ENCODE measurements at regions of chr7 and their contacts with region 1.

Region 1: GRCh38 chr7:98106647-98107445 is at the start of gene LMTK2:
- DNase-seq: peak; percentile 77 to 93
- ATAC-seq: peak; percentile 97 to 98
- H3K4me3 ChIP-seq: peak within 1 kb of the TSS; percentile 90
- H3K27ac ChIP-seq: peak within 1 kb of the TSS; percentile 86 to 91
- H3K4me1 ChIP-seq: peaks cover 39% of the 10 kb centered on the region
- CTCF ChIP-seq: peak; percentile 94
- EP300 ChIP-seq: no peak
- POLR2A ChIP-seq: peak; percentile 92
- RAD21 ChIP-seq: peak; percentile 66 to 74
- polyA plus RNA-seq, gene LMTK2: 13.0 and 14.9 TPM in 2 replicates

Region 2: GRCh38 chr7:97555857-97556421 is 550.9 kb before region 1 on chr7:
- CTCF ChIA-PET with region 1: no interaction called
- POLR2A ChIA-PET with region 1: no interaction called
- DNase-seq: peak in 1 of 2 experiments; percentile 2
- ATAC-seq: no peak
- H3K4me3 ChIP-seq: no peak overlapping the region
- H3K27ac ChIP-seq: no peak overlapping the region
- H3K4me1 ChIP-seq: no peaks in the 10 kb centered on the region
- CTCF ChIP-seq: no peak
- EP300 ChIP-seq: no peak
- POLR2A ChIP-seq: no peak
- RAD21 ChIP-seq: no peak

Region 3: GRCh38 chr7:97722386-97722785 is 384.5 kb before region 1 on chr7:
- CTCF ChIA-PET with region 1: no interaction called
- POLR2A ChIA-PET with region 1: no interaction called
- DNase-seq: no peak
- ATAC-seq: no peak
- H3K4me3 ChIP-seq: no peak overlapping the region
- H3K27ac ChIP-seq: no peak overlapping the region
- H3K4me1 ChIP-seq: no peaks in the 10 kb centered on the region
- CTCF ChIP-seq: no peak
- EP300 ChIP-seq: no peak
- POLR2A ChIP-seq: no peak
- RAD21 ChIP-seq: no peak

Region 4: DNA sequence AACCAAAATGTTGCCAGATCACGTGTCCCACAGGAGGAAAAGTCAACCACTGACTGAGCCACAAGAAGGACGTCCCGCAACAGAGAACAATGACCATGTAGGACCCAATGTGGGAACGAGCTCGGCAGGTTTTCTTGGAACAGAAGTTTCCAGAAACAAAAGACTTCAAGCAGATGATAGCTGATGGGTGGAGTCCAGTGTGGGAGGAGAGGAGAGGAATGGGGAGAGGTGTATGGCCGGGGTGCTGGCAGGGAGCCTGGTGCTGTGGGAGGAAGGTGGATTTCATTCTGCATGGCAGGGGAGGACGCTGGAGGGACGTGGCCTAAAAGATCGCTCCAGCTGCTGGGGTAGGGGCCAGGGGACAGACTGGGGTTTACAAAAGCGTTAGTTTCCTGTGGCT is 48.7 kb before region 1 on chr7:
- CTCF ChIA-PET with region 1: no interaction called
- POLR2A ChIA-PET with region 1: no interaction called
- DNase-seq: no peak
- ATAC-seq: no peak
- H3K4me3 ChIP-seq: no peak overlapping the region
- H3K27ac ChIP-seq: no peak overlapping the region
- H3K4me1 ChIP-seq: no peaks in the 10 kb centered on the region
- CTCF ChIP-seq: no peak
- EP300 ChIP-seq: no peak
- POLR2A ChIP-seq: no peak
- RAD21 ChIP-seq: no peak

Region 5: DNA sequence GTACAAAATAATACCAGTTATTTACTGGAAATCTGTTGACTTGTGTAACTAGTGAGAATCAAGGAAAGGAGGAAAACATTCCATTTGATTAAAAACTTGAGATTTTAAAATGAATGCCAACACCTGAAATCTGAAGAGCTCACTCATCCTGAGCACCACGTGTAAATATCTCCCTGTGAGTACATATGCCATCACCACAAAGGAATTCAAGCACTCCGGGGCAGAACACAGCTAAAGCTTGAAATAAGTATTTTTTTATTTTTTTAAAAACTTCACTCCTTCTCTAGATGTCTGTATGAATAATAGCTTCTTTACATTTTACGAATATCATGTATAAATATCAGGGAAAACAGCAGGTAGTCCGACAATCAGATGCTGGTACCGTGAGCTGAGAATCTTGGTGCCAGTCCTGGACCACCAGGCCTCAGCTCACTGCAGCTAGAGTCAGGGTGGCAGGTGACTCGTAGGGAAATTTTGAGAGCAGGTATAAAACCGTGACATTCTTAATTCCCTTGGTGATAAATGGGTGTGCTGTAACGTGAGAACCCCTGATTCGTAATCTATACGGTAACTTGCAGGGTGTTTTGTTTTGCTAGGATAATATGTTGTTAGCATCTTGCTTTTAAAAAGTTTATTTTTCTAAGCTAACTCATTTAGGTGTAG is 12.5 kb after region 1 on chr7:
- CTCF ChIA-PET with region 1: interaction called, 11 read pairs
- POLR2A ChIA-PET with region 1: interaction called, 5 read pairs
- DNase-seq: peak; percentile 44 to 46
- ATAC-seq: peak; percentile 76 to 79; a peak in 5 of 6 replicates
- H3K4me3 ChIP-seq: no peak overlapping the region
- H3K27ac ChIP-seq: peak overlapping the region; percentile 42 to 69; a peak in 4 of 6 replicates
- H3K4me1 ChIP-seq: peaks cover 53% of the 10 kb centered on the region
- CTCF ChIP-seq: no peak
- EP300 ChIP-seq: no peak
- POLR2A ChIP-seq: no peak
- RAD21 ChIP-seq: no peak

Region 6: GRCh38 chr7:98162758-98163157 is 55.9 kb after region 1 on chr7:
- CTCF ChIA-PET with region 1: interaction called, 80 read pairs
- POLR2A ChIA-PET with region 1: no interaction called
- DNase-seq: no peak
- ATAC-seq: no peak
- H3K4me3 ChIP-seq: no peak overlapping the region
- H3K27ac ChIP-seq: no peak overlapping the region
- H3K4me1 ChIP-seq: no peaks in the 10 kb centered on the region
- CTCF ChIP-seq: no peak
- EP300 ChIP-seq: no peak
- POLR2A ChIP-seq: no peak
- RAD21 ChIP-seq: no peak

Region 7: DNA sequence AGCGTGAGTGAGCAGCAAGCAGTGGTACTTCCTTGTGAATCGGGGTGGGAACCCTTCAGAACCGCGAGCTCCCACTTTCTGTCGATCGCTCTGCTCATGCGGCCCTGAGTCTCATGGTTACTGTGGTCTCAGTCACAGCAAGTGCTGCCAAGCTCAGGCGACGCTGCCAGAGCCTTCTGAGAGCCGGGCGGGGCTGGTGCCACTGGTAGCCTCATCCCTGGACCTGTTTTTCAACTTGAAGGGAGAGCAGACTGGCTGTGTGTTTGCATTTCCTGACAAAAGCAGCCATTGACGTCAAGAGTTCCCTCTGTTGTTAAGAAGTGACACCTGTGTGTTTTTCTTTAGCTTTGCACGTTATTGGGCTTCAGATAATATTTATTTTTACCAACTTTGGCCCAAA is 71.5 kb after region 1 on chr7:
- CTCF ChIA-PET with region 1: interaction called, 80 read pairs
- POLR2A ChIA-PET with region 1: no interaction called
- DNase-seq: peak in 1 of 2 experiments; percentile 26
- ATAC-seq: peak; percentile 8 to 42; a peak in 2 of 6 replicates
- H3K4me3 ChIP-seq: no peak overlapping the region
- H3K27ac ChIP-seq: no peak overlapping the region
- H3K4me1 ChIP-seq: no peaks in the 10 kb centered on the region
- CTCF ChIP-seq: no peak
- EP300 ChIP-seq: no peak
- POLR2A ChIP-seq: no peak
- RAD21 ChIP-seq: no peak

Region 8: DNA sequence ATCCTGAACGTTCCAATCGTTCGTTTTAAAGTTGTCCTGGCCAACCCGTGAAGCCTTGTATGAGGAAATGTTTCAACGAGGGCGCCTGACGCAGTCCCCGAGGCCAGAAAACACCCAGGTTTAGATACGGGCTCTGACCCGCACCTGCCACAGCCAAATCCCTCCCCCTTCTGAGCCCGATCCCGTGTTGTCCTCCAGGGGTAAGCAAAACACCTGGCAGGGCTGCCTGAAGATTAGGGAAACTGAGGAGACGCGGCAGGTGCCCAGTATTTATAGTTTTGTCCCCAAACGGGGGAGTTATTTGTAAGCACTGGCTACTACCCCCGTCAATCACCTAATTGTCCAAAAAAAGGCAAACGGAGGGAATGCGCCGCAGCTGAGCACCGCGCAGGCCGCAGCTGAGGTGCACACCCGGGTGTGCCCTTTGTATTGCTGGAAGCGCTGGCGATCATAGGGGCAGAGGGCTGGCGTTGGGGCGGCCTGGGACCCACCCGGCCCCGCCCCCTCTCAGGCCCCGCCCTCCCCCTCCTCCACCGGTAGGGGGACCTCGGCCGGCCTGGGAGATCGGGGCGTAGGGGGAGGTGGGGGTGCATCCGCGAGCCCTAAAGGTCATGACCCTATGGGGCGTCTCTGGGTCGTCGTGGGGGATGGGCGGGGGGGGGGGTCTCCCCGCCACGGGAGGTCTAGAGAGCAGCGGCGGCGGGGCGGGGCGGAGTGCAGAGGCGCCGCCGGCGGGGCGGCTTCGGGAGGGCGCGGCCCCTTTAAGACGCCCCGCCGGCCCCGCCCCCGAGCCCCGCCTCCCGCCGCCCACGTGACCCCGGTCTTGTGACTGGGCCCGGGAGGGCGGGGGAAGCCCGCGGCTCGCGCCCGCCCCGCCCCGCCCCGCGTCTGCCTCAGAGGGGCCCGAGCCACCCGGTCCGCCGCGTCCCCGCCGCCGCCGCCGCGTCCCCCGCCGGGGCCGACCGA is 174.2 kb after region 1 on chr7 and contains the start of gene BRI3:
- CTCF ChIA-PET with region 1: no interaction called
- POLR2A ChIA-PET with region 1: no interaction called
- DNase-seq: peak; percentile 85 to 90
- ATAC-seq: peak; percentile 76 to 79
- H3K4me3 ChIP-seq: peak within 1 kb of the TSS; percentile 98
- H3K27ac ChIP-seq: peak within 1 kb of the TSS; percentile 98 to 99
- H3K4me1 ChIP-seq: peaks cover 63% of the 10 kb centered on the region
- CTCF ChIP-seq: no peak
- EP300 ChIP-seq: peak in 1 of 2 experiments; percentile 36; a peak in 1 of 5 replicates
- POLR2A ChIP-seq: peak; percentile 91
- RAD21 ChIP-seq: no peak
- polyA plus RNA-seq, gene BRI3: 61.0 and 68.3 TPM in 2 replicates

Measured in A549 (cell line).